GM10248 (cell line): ENCODE measurements at regions of chr19 and their contacts with region 1.

Region 1: GRCh38 chr19:42423462-42424344 is 3.5 kb downstream of the LIPE start:
- DNase-seq: peak; percentile 97
- CTCF ChIP-seq: no peak

Region 2: GRCh38 chr19:42396381-42397262 is 27.1 kb before region 1 on chr19:
- CTCF ChIA-PET with region 1: interaction called, 29 read pairs
- POLR2A ChIA-PET with region 1: interaction called, 5 read pairs
- DNase-seq: peak; percentile 100
- CTCF ChIP-seq: no peak

Region 3: DNA sequence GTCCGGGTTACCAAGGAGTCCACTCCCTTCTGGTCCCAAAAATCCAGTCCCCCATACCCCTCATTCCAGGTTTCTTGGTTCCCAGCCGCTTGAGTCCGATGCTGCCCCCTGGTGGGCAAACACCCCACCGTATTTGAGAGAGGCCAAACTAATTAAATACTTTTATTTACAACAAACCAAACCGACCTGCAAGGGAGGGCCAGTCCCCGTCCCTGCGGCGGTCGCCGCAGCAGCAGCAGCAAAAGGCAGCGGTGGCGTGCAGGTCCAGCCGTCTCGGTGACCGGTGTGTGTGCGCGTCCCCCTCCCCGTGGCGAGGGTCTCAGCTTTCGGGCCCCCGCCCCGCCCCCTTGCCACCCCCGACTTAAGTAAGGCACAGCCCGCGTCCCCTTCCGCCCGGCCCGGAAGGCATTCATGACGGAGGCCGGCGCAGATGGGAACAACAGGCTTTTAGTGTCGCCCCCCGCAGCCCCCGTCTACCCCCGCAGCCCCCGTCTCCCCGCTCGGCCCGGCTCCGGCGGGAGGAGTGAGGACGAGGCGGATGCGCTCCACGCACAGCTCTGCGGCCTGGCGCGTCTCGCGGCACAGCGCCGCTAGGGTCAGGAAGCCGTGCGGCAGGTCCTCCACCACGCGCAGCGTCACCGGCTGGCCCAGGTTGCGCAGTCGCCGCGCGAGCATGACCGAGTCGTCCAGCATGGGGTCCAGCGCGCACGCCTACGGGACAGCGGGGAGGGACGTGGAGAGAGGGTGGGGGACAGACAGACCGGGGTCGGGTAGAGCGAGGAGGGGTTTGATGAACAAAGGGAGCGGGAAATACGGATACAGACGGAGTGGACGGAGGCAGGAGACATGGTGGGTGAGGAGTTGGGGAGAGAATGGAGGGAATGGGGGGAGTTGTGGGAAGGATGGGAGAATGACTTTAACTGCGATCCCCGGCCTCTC is 22.1 kb before region 1 on chr19:
- CTCF ChIA-PET with region 1: interaction called, 29 read pairs
- POLR2A ChIA-PET with region 1: interaction called, 5 read pairs
- DNase-seq: peak; percentile 73
- CTCF ChIP-seq: peak; percentile 73

Region 4: DNA sequence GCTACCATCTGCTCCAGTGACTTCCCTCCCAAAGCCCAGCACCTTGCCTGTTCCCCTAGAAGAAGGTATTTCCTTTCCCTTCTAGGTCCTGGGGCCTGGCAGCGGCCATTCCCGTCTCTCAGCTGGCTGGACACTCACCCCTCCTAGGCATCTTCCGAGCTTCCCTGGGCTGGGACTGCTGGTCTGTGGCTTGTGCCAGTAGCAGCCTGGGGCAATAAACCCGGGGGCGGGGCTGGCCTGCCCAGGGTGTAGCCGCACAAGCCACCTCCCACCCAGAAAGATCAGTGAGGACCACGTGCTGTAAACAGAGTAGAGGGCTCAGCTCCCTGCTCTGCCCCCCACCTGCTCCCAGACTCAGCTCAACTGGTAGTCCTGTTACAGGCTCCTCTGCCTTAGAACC is 11.5 kb before region 1 on chr19:
- CTCF ChIA-PET with region 1: interaction called, 20 read pairs
- POLR2A ChIA-PET with region 1: interaction called, 5 read pairs
- DNase-seq: no peak
- CTCF ChIP-seq: no peak